A549 (cell line): ENCODE measurements at regions of chr5 and their contacts with region 1.

Region 1: DNA sequence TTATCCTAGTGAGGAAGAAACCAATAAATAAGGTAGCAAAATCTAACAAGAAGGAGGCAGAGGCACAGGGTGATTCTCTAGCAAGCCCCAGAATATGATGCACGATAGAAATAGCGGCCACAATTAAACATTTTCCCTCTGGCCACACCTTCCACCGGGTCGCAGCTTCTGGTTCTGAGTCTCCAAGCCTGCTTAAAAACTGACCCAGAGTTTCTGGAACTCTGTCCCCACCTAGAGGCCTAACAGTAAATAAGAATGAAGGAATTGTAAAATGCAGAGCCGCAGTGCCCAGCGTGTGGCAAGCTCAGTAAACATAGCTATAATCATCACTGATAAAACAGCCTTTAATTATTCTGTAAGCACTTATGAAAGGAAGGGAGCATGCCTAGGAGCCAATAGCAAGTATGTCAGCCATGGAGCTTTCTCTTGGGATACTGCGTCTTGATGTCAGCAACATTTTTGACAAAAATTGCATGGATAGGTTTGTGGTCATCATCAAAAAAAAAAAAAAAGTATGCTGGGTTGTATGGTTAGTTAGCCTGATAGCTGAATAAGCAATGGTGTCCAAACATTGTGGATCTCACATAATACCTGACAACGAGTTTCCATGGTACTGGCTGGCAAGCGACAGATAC is 465.5 kb downstream of the DNAH5 start:
- DNase-seq: peak; percentile 43 to 50
- ATAC-seq: peak; percentile 91 to 93; a peak in 5 of 6 replicates
- H3K4me3 ChIP-seq: no peak overlapping the region
- H3K27ac ChIP-seq: no peak overlapping the region
- H3K4me1 ChIP-seq: no peaks in the 10 kb centered on the region
- CTCF ChIP-seq: peak; percentile 58
- EP300 ChIP-seq: no peak
- POLR2A ChIP-seq: no peak
- RAD21 ChIP-seq: peak; percentile 73 to 75

Region 2: GRCh38 chr5:13464532-13465193 is 14.3 kb before region 1 on chr5:
- CTCF ChIA-PET with region 1: interaction called, 12 read pairs
- POLR2A ChIA-PET with region 1: no interaction called
- DNase-seq: no peak
- ATAC-seq: no peak
- H3K4me3 ChIP-seq: no peak overlapping the region
- H3K27ac ChIP-seq: no peak overlapping the region
- H3K4me1 ChIP-seq: no peaks in the 10 kb centered on the region
- CTCF ChIP-seq: no peak
- EP300 ChIP-seq: no peak
- POLR2A ChIP-seq: no peak
- RAD21 ChIP-seq: no peak